ENCODE measurements at regions of chr10 and their contacts with region 1.

Region 1: GRCh38 chr10:29386342-29386999 is 97.6 kb downstream of the LYZL1 start:
- DNase-seq: peak; percentile 45
- H3K27ac ChIP-seq: no peak overlapping the region
- CTCF ChIP-seq: peak; percentile 85

Region 2: DNA sequence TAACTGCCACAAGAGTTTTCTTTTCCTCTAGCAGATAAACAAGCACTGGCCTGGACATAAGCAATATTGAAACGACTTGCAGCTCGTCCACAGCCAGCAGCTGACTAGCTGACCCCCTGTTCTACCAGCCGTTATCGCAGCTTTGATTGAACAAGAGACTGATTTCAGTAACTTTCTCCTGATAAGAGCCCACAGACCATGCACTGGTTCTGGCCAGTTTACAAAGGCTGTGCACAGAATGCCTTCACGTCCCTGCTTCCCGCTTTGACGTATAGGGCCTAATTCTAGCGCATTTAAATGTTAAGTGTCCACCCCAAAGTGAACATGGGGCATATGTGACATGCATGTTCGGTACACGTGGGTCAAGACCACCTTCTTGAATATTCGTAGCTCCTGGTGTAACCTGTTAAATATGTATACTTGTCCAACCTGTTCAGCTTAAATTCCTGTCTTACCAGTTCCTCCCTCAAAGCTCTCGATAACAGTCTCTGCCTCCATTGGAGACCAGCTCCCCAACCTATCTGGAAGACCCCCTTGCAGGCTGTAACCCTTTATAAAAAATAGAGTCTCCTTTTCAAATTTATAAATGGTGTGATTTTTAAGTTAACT is 28.4 kb before region 1 on chr10:
- CTCF ChIA-PET with region 1: interaction called, 10 read pairs
- POLR2A ChIA-PET with region 1: no interaction called
- DNase-seq: no peak
- H3K27ac ChIP-seq: no peak overlapping the region
- CTCF ChIP-seq: no peak

Region 3: DNA sequence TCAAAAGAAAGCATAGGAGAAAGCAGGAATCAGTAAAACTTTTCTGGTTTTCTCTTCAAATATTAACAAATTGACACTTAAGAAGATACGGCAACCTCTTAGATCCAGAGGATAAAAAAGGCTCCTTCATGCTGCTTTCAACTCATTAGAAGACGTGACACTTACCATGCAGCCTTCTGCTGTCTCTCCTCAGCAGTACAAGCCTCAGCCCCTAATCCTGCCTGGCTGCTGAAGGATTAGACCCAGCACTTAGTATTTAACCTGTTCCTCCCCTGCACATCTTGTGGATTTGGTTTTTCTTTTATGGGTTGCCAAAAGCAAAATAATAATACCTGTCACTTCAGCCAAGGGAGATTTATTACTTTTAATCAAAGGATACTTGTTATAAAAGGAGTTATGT is 10.8 kb after region 1 on chr10:
- CTCF ChIA-PET with region 1: interaction called, 13 read pairs
- POLR2A ChIA-PET with region 1: no interaction called
- DNase-seq: no peak
- H3K27ac ChIP-seq: no peak overlapping the region
- CTCF ChIP-seq: no peak

Region 4: DNA sequence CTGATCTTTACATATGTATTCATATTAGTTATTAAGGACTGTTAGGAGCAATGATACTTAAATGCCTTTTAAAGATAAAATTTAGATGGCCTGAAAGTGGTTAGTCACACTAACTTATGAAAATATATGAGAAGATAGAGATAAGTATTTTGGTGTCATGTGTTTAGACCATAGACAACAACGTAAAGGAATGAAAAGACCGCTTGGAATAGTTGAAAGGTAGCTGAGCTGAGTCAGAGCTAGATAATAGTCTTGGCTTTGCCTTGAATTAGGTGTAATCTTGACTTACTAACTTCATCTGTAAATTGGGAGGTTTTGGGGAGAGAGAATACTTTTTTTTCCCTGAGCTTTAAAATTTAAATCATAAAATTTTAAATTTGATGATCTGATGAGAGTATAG is 29.4 kb after region 1 on chr10:
- CTCF ChIA-PET with region 1: no interaction called
- POLR2A ChIA-PET with region 1: no interaction called
- DNase-seq: no peak
- H3K27ac ChIP-seq: no peak overlapping the region
- CTCF ChIP-seq: no peak

Region 5: GRCh38 chr10:29555746-29556481 is 169.4 kb after region 1 on chr10:
- CTCF ChIA-PET with region 1: no interaction called
- POLR2A ChIA-PET with region 1: no interaction called
- DNase-seq: no peak
- H3K27ac ChIP-seq: no peak overlapping the region
- CTCF ChIP-seq: no peak

Measured in RWPE1 (cell line).